MCF 10A (cell line): ENCODE measurements at regions of chr2 and their contacts with region 1.

Region 1: GRCh38 chr2:177212106-177212890 is at the start of gene HNRNPA3:
- DNase-seq: peak; percentile 98
- H3K4me3 Mint-ChIP-seq: peak within 1 kb of the TSS; percentile 91
- H3K27ac Mint-ChIP-seq: peak within 1 kb of the TSS; percentile 100
- H3K4me1 Mint-ChIP-seq: peaks cover 13% of the 10 kb centered on the region
- H3K27me3 Mint-ChIP-seq: no peaks in the 10 kb centered on the region
- CTCF ChIP-seq: no peak
- total RNA-seq, gene HNRNPA3: 142 and 179 TPM in 2 replicates

Region 2: DNA sequence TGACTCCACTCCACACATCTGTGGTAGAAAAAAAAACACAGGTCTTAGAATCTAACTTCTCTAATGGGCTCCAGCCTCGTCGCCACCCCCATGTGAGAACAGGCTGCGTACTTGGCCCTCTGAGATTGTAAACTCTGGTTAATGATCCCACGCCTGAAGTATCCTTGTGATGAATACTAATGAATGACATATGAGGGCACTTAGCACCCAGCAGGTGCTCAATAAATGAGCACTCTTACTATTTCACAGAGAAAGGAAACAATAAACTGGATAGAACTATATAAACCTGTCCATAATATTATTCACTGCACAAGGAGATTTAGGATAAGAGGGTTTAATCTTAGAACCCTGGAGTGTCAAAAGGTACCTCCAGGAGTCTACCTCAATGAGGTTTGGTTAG is 309.8 kb before region 1 on chr2:
- CTCF ChIA-PET with region 1: no interaction called
- POLR2A ChIA-PET with region 1: no interaction called
- intact Hi-C with region 1: no loop called
- DNase-seq: no peak
- H3K4me3 Mint-ChIP-seq: no peak overlapping the region
- H3K27ac Mint-ChIP-seq: no peak overlapping the region
- H3K4me1 Mint-ChIP-seq: no peaks in the 10 kb centered on the region
- H3K27me3 Mint-ChIP-seq: peaks cover 82% of the 10 kb centered on the region
- CTCF ChIP-seq: no peak

Region 3: GRCh38 chr2:177118636-177119035 is 93.7 kb before region 1 on chr2:
- CTCF ChIA-PET with region 1: no interaction called
- POLR2A ChIA-PET with region 1: no interaction called
- intact Hi-C with region 1: no loop called
- DNase-seq: no peak
- H3K4me3 Mint-ChIP-seq: no peak overlapping the region
- H3K27ac Mint-ChIP-seq: no peak overlapping the region
- H3K4me1 Mint-ChIP-seq: peaks cover 6% of the 10 kb centered on the region
- H3K27me3 Mint-ChIP-seq: peaks cover 86% of the 10 kb centered on the region
- CTCF ChIP-seq: no peak

Region 4: DNA sequence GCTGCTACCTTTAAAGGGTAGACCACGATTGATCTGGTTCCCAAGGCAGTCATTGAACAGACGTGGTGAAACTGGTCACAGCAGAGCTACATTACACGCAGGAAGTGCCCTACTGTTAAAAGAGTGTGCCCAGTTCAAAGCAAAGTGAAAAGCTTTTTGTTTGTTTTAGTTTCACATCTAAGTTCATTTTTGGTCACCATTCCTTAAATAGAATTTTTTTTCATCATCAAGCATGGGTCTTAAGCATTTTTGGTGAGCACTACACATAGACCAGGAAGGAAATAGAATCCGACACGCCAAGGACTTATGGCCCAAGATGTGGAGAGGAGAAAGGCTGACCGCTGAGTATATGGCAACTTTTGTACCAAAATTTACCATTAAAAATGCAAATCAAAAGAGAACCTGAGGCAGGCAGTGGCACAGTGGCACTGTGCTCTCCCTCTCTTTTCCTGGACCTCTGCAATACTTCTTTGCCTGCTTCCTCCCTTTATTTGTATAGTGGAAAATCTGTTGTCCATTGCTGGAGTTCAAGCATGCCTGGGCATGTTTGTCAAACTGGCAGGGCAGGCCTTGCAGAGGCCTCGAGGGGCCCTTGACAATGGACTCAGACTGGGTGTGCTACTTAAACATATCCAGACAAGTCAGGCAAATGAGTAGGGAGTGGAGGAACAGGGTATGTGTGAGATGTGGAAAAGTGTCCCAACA is 42.3 kb before region 1 on chr2:
- CTCF ChIA-PET with region 1: interaction called, 16 read pairs
- POLR2A ChIA-PET with region 1: interaction called, 139 read pairs
- intact Hi-C with region 1: loop called (anchors 1 kb)
- DNase-seq: peak; percentile 95
- H3K4me3 Mint-ChIP-seq: peak overlapping the region; percentile 3
- H3K27ac Mint-ChIP-seq: peak overlapping the region; percentile 91
- H3K4me1 Mint-ChIP-seq: peaks cover 28% of the 10 kb centered on the region
- H3K27me3 Mint-ChIP-seq: no peaks in the 10 kb centered on the region
- CTCF ChIP-seq: no peak

Region 5: GRCh38 chr2:177195194-177195593 is 17.1 kb before region 1 on chr2:
- CTCF ChIA-PET with region 1: interaction called, 5 read pairs
- POLR2A ChIA-PET with region 1: interaction called, 61 read pairs
- intact Hi-C with region 1: no loop called
- DNase-seq: no peak
- H3K4me3 Mint-ChIP-seq: no peak overlapping the region
- H3K27ac Mint-ChIP-seq: no peak overlapping the region
- H3K4me1 Mint-ChIP-seq: peaks cover 6% of the 10 kb centered on the region
- H3K27me3 Mint-ChIP-seq: no peaks in the 10 kb centered on the region
- CTCF ChIP-seq: no peak

Region 6: GRCh38 chr2:177229448-177230242 is 17.3 kb after region 1 on chr2:
- CTCF ChIA-PET with region 1: interaction called, 4 read pairs
- POLR2A ChIA-PET with region 1: interaction called, 23 read pairs
- intact Hi-C with region 1: no loop called
- DNase-seq: no peak
- H3K4me3 Mint-ChIP-seq: no peak overlapping the region
- H3K27ac Mint-ChIP-seq: peak overlapping the region; percentile 35
- H3K4me1 Mint-ChIP-seq: peaks cover 21% of the 10 kb centered on the region
- H3K27me3 Mint-ChIP-seq: no peaks in the 10 kb centered on the region
- CTCF ChIP-seq: no peak

Region 7: GRCh38 chr2:177392373-177393202 is 180.3 kb after region 1 on chr2 and contains the start of gene AGPS:
- CTCF ChIA-PET with region 1: interaction called, 3 read pairs
- POLR2A ChIA-PET with region 1: interaction called, 13 read pairs
- intact Hi-C with region 1: no loop called
- DNase-seq: peak; percentile 71
- H3K4me3 Mint-ChIP-seq: peak within 1 kb of the TSS; percentile 96
- H3K27ac Mint-ChIP-seq: peak within 1 kb of the TSS; percentile 97
- H3K4me1 Mint-ChIP-seq: peaks cover 48% of the 10 kb centered on the region
- H3K27me3 Mint-ChIP-seq: no peaks in the 10 kb centered on the region
- CTCF ChIP-seq: peak; percentile 14
- total RNA-seq, gene AGPS: 49.5 and 50.5 TPM in 2 replicates